ENCODE measurements at regions of chr5 and their contacts with region 1.

Region 1: DNA sequence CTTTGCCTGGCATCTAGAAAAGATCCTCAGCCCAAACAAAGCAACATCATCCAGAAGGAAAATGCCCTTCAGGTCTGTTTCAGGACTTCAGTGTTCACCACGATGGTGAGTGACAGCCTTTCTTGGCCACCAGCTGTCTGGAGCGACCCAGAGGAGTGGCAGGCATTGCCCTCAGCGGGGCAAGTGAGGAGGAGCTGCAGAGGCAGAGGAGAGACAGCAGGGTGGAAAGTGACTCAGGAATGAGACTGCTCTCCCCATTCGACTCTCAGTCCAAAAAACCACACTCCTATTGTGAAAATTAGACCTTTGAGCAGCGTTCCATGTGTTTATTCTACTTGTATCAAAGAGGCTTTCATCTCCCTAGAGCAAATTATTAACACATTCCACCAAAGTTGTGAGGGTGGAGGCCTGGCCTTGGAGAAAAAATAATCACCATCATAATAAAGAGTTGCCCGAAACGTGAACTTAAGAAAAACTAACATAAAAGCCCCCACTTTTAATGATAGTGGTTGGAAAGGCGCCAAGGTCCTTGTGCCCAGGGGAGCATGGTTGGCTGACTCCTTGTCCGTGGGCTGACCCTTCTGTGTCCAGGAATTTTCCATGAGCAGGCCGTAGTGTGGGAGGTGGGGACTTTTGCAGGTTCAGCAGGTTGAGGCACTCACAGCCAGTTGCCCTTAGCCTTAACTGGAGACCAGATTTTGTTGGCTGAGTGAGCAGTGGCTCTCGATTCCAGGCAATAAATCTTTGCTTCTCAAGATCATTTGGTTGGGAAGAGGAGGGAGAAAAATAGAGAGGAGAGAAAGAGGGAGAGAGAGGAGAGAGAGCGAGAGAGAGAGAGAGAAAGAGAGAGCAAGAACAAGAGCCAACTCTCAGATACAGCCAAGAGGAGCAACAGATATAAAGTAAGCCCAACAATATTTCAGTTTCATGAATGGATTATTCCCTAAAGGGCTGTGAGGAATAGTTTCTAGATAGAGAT is 125.9 kb upstream of the ANKRD55 start:
- DNase-seq: peak; percentile 12
- ATAC-seq: peak; percentile 61
- H3K4me3 ChIP-seq: no peak overlapping the region
- H3K27ac ChIP-seq: no peak overlapping the region
- H3K4me1 ChIP-seq: peaks cover 4% of the 10 kb centered on the region
- H3K27me3 ChIP-seq: no peaks in the 10 kb centered on the region
- CTCF ChIP-seq: no peak
- POLR2A ChIP-seq: no peak
- RAD21 ChIP-seq: no peak

Region 2: GRCh38 chr5:56247592-56247991 is 111.4 kb before region 1 on chr5:
- CTCF ChIA-PET with region 1: no interaction called
- POLR2A ChIA-PET with region 1: no interaction called
- dilution Hi-C with region 1: no loop called
- in situ Hi-C with region 1: no loop called
- intact Hi-C with region 1: no loop called
- DNase-seq: peak; percentile 53
- ATAC-seq: peak; percentile 81
- H3K4me3 ChIP-seq: no peak overlapping the region
- H3K27ac ChIP-seq: no peak overlapping the region
- H3K4me1 ChIP-seq: peaks cover 2% of the 10 kb centered on the region; the same call in 1 of the 2 replicates
- H3K27me3 ChIP-seq: no peaks in the 10 kb centered on the region
- CTCF ChIP-seq: no peak
- POLR2A ChIP-seq: no peak
- RAD21 ChIP-seq: no peak

Region 3: DNA sequence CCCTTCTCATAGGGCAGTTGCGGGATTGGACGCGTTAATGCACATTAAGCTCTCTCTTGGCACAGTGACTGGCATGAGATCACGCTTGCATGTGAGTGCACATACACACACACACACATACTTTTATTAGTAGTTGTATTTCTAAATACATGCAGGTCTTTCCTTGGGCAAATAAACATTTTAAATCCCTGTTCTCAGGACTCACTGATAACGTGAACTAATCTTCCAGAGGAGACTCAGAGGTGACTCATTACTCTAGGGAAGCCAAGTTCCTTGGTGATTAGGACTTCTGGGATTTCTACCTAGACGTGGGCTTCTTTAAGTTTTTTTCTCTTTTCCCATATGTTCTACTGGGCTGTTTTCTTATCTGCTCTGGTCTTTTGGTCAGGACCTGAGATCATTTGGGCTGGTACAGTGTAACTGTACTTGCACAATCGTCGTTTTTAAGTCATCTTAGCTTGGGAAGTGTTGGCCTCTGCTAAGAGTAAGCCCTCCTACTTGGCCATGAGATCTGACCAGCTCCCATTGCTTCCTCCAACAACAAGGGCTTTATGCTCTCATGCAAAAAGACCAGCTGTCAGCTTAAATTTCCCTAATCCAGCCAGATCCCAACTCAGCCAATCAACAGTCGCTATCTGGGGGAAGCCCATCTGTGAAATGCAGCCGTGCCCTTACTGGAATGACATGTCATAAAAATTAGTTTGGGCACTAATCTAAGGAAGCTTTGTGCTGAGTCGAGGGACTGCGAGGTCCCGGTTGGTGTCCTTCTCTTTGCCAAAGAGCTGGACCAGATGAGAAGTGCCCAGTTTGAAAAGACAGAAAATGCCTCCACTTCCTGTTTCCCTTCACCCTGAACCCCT is 50.6 kb after region 1 on chr5:
- CTCF ChIA-PET with region 1: interaction called, 6 read pairs
- POLR2A ChIA-PET with region 1: no interaction called
- dilution Hi-C with region 1: no loop called
- in situ Hi-C with region 1: no loop called
- intact Hi-C with region 1: loop called (anchors 5 kb)
- DNase-seq: peak; percentile 99
- ATAC-seq: peak; percentile 90
- H3K4me3 ChIP-seq: no peak overlapping the region
- H3K27ac ChIP-seq: peak overlapping the region; percentile 64
- H3K4me1 ChIP-seq: peaks cover 14% of the 10 kb centered on the region
- H3K27me3 ChIP-seq: no peaks in the 10 kb centered on the region
- CTCF ChIP-seq: no peak
- POLR2A ChIP-seq: no peak
- RAD21 ChIP-seq: peak; percentile 25

Region 4: GRCh38 chr5:56481428-56482357 is 122.7 kb after region 1 on chr5:
- CTCF ChIA-PET with region 1: no interaction called
- POLR2A ChIA-PET with region 1: no interaction called
- dilution Hi-C with region 1: no loop called
- in situ Hi-C with region 1: no loop called
- intact Hi-C with region 1: loop called (anchors 5 kb)
- DNase-seq: peak; percentile 54
- ATAC-seq: peak; percentile 31
- H3K4me3 ChIP-seq: peak overlapping the region; percentile 37
- H3K27ac ChIP-seq: peak overlapping the region; percentile 58
- H3K4me1 ChIP-seq: peaks cover 21% of the 10 kb centered on the region
- H3K27me3 ChIP-seq: no peaks in the 10 kb centered on the region
- CTCF ChIP-seq: peak; percentile 27; the same call in 1 of the 2 replicates
- POLR2A ChIP-seq: 0 out of 2 replicates have a peak, but pooled peaks have one; percentile 42
- RAD21 ChIP-seq: peak; percentile 12; the same call in 1 of the 2 replicates

Region 5: DNA sequence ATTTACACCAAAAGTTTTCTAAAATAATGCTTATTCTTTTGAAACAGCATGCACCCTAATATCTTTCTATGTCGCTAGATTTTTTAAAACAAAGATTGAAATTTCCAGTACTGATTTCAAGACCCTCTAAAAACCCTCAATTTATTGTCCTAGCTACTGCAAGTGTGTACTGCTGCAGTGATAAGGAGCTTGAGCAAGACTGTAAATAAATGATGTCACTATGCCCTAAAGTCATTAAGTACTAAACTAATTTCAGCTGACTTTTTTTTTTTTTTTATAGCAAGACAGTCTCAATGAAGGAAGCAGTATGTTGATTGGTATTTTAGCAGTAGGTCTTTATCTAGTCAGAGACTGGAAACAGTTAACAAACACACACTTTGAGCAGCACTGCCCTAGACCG is 605.2 kb after region 1 on chr5:
- CTCF ChIA-PET with region 1: no interaction called
- POLR2A ChIA-PET with region 1: no interaction called
- dilution Hi-C with region 1: no loop called
- in situ Hi-C with region 1: no loop called
- intact Hi-C with region 1: no loop called
- DNase-seq: no peak
- ATAC-seq: no peak
- H3K4me3 ChIP-seq: no peak overlapping the region
- H3K27ac ChIP-seq: no peak overlapping the region
- H3K4me1 ChIP-seq: no peaks in the 10 kb centered on the region
- H3K27me3 ChIP-seq: peaks cover 44% of the 10 kb centered on the region
- CTCF ChIP-seq: no peak
- POLR2A ChIP-seq: no peak
- RAD21 ChIP-seq: no peak